GM13977 (cell line): ENCODE measurements at regions of chr20 and their contacts with region 1.

Region 1: GRCh38 chr20:32959351-32960221 is 44.6 kb downstream of the SUN5 start:
- DNase-seq: peak; percentile 4
- CTCF ChIP-seq: no peak

Region 2: GRCh38 chr20:33009214-33010132 is 49.9 kb after region 1 on chr20:
- in situ Hi-C with region 1: loop called (anchors 10 kb)
- DNase-seq: no peak
- CTCF ChIP-seq: no peak

Region 3: DNA sequence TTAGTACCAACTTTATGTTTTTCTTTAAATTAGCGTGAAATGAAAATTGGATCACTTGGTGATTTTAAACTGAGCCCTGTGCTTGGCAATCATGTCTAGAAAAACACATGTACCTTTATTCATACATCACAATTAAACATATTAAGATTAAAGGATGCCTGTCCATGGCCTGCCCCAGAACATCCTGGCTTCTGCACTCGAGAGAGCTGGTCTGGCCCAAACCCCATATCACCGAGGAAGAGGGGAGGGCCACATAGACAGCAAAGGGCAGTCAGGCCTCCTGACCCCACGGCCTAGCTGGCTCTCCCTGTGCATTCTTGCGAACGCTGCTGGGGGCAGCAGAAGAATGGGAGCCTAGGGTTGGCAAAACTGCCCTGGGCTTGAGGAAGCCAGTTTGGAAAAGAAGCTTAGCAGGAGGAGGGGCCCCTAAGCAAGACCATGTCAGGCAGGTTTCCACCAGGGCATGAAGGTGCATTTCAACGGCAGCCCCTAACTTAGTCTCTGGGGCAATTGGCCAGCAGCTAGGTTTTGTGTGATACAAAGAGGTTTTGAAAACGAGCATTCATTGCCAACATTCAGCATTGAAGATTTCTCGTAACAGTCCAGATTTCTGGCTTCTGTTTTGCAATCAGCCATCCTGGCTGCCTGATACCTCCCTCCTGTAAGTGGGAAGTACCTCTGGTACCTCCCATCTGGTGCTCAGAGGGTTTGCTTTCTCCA is 102.7 kb after region 1 on chr20:
- in situ Hi-C with region 1: no loop called
- DNase-seq: no peak
- CTCF ChIP-seq: no peak

Region 4: DNA sequence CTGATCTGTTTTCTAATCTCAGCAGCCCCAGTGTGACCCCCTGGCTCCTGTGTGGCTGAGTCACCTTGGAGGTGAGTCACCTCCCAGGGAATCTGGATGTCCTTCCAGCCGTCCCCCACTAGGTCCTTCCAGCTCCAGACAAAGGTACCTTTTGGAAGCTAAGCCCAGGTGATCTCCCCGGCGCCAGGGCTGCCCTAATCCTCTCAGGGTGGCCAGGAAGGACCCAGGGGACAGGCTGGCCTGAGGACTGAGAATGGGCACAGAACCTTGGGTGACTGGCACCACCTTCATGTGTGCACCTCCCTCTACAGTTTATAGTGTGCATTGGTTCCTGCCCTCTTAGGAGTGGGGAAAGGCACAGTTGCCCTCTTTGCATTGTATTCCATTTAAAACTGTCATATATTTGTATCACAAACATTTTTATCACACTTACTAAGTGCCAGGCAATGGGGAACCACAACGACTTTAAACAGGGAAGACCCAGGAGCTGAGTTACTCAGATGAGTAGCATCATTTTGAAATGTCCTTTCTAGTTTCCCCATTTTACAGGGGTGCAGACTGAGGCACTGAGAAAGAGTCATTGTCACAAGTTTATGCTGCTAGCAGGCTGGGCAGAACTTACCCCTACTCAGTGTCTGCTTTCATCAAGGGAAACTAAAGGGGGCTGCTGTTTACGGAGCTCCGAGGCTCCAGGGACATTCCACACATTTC is 117.2 kb after region 1 on chr20:
- in situ Hi-C with region 1: no loop called
- DNase-seq: no peak
- CTCF ChIP-seq: no peak